Right lobe of liver (tissue), 6 donors: ENCODE measurements at regions of chr13 and their contacts with region 1.

Region 1: DNA sequence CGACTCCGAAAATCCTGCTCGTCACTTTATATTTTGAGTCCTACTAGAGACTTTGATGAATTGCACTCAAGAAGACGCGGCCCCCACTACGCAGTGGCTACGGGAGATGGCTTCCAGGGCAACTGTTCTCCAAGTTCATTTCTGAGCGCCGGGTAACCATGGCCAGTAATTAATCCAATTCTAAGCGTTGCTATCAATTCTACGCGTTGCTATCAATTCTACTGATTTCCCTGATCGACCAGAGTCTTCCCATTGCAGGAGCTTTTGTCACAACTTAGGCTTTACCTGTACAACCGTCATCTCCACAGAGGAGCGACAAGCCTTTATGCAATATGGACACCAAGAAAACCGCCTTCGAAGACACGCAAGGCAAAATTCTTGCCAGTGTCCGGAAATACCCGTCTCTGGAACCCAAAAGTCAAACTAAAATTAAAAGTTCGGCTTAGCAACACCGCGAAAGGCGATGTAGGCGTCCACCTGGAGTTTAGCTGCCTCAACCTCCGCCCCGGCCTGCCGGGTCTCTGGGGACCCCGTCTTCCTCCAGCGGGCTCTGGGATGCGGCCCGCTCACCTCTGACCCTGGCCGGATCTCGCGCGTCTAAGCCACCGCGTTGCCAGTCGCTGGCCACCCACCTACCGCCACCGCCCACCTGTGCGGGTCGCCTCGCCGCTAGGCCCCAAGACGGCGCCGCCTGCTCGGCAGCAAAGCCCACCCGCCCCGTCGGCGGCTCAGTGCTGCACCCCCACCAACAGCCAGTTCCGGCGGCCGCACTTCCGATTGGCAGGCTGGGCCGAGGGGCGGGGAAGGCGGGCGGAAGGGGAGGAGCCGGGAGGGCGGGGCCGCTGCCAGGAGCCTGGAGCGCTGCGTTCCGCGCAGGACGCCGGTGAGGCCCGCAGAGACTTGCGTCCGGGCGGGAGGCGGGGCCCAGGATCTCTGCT is at the start of gene SUPT20H:
- DNase-seq: peak; percentile 96 to 97 (median 97)
- ATAC-seq: peak; percentile 100
- H3K4me3 ChIP-seq: peak within 1 kb of the TSS; percentile 81 to 100 (median 95)
- H3K27ac ChIP-seq: peak within 1 kb of the TSS; percentile 73 to 86 (median 75)
- H3K4me1 ChIP-seq: peaks cover 0 to 9% (median 3%) of the 10 kb centered on the region in 4 donors
- H3K27me3 ChIP-seq: no peaks in the 10 kb centered on the region
- CTCF ChIP-seq: no peak
- POLR2A ChIP-seq: peak; percentile 80
- total RNA-seq, gene SUPT20H: 14.0 to 18.1 (median 16.1) TPM

Region 2: DNA sequence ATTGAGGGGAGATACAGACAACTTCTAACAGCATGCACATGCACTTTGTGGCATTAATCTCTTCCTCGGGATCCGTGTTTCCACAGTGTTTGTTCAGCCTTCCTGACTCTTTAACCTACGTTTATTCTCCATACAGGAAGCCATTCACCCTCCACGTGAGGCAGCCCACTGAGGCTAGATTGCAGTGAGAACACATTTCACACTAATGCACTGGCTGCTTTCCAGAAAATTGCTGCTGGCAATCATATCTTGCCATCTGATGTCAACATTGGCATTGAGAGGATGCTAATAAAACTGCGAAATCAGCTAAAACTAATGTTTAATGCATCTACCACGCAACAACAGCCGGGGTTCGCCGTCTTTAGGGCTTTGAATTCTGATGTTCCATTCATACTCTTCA is 958.0 kb before region 1 on chr13:
- intact Hi-C with region 1: no loop called
- DNase-seq: no peak
- ATAC-seq: no peak
- H3K4me3 ChIP-seq: no peak overlapping the region
- H3K27ac ChIP-seq: no peak overlapping the region
- H3K4me1 ChIP-seq: no peaks in the 10 kb centered on the region
- H3K27me3 ChIP-seq: no peaks in the 10 kb centered on the region
- CTCF ChIP-seq: no peak
- POLR2A ChIP-seq: no peak

Region 3: DNA sequence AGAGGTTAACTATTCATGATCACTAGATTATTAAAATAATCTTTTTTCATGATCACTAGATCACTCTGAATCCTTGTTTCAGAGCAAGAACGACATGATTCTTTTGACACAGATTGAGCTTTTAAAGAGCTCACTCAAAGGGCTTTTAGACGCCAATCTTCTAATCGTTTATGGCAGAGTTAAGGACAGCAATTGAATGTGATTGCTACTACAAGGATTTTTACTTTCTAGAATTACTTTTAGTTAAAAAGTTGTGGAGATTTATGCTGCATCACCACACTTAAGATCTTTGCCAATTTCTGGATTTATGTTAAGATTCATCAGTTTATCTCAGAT is 57.3 kb before region 1 on chr13:
- intact Hi-C with region 1: loop called in 1 of 2 experiments (anchors 10 kb)
- DNase-seq: no peak
- ATAC-seq: no peak
- H3K4me3 ChIP-seq: peak overlapping the region in 1 of 3 donors; percentile 73
- H3K27ac ChIP-seq: no peak overlapping the region
- H3K4me1 ChIP-seq: peaks cover 0 to 14% (median 4%) of the 10 kb centered on the region in 4 donors
- H3K27me3 ChIP-seq: no peaks in the 10 kb centered on the region
- CTCF ChIP-seq: no peak
- POLR2A ChIP-seq: no peak